ENCODE measurements at regions of chr14 and their contacts with region 1.

Region 1: GRCh38 chr14:76910371-76910890 is 84.2 kb downstream of the LRRC74A start:
- DNase-seq: no peak
- H3K4me3 ChIP-seq: no peak overlapping the region
- H3K27ac ChIP-seq: no peak overlapping the region
- H3K4me1 ChIP-seq: peaks cover 15 to 31% (median 21%) of the 10 kb centered on the region in 4 donors
- H3K27me3 ChIP-seq: no peaks in the 10 kb centered on the region
- CTCF ChIP-seq: no peak
- EP300 ChIP-seq: no peak
- POLR2A ChIP-seq: no peak

Region 2: DNA sequence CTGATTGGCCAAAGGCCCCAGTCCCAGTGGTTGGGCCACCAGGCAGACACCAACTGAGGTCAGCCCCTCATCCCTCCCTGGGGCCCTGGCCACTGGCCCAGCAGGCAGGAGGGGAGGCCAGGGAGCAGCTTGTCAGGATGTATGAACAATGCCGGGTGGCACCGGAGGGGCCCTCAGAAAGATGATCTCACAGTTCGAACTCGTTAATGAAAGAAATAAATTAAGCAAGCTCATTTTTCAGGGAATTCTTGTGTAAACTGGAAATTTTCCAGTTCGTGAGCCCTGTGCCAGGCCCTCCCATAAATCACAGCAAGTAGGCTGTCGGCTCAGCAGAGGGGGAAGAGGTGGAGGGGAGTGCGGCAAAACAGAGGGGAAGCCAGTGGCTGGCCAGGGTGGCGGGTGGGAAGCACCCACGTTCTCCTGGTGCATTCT is 326.1 kb before region 1 on chr14:
- intact Hi-C with region 1: no loop called
- DNase-seq: no peak
- H3K4me3 ChIP-seq: no peak overlapping the region
- H3K27ac ChIP-seq: no peak overlapping the region
- H3K4me1 ChIP-seq: peaks cover 0 to 12% (median 4%) of the 10 kb centered on the region in 4 donors
- H3K27me3 ChIP-seq: no peaks in the 10 kb centered on the region
- CTCF ChIP-seq: no peak
- EP300 ChIP-seq: no peak
- POLR2A ChIP-seq: no peak

Region 3: DNA sequence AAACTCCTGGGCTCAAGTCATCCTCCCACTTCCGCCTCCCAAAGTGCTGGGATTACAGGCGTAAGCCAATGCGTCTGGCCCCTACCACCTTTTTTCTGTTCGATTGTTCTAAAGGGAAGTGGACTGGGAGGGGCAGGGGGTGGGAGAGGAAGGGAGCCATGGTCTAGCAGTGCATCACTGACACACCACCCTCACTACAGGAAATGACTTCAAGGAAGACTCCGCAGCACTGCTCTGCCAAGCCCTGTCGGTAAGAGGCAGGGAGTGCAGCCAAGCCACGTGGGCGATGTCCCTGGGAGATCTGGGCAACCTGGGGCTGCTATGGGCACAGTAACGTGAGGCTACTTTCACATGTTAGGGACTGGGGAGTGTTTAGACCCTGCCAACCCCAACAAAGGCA is 66.2 kb before region 1 on chr14:
- intact Hi-C with region 1: no loop called
- DNase-seq: no peak
- H3K4me3 ChIP-seq: no peak overlapping the region
- H3K27ac ChIP-seq: peak overlapping the region; percentile 31 to 67 (median 50)
- H3K4me1 ChIP-seq: peaks cover 0 to 4% (median 0%) of the 10 kb centered on the region in 4 donors
- H3K27me3 ChIP-seq: peaks cover 0 to 13% (median 0%) of the 10 kb centered on the region in 4 donors
- CTCF ChIP-seq: peak in 1 of 3 experiments; percentile 36
- EP300 ChIP-seq: peak; percentile 18
- POLR2A ChIP-seq: no peak

Region 4: GRCh38 chr14:76876076-76876475 is 34.4 kb before region 1 on chr14:
- intact Hi-C with region 1: loop called (anchors 5 kb)
- DNase-seq: no peak
- H3K4me3 ChIP-seq: no peak overlapping the region
- H3K27ac ChIP-seq: no peak overlapping the region
- H3K4me1 ChIP-seq: peaks cover 0 to 4% (median 2%) of the 10 kb centered on the region in 4 donors
- H3K27me3 ChIP-seq: no peaks in the 10 kb centered on the region
- CTCF ChIP-seq: peak; percentile 94 to 96 (median 94)
- EP300 ChIP-seq: no peak
- POLR2A ChIP-seq: no peak

Region 5: GRCh38 chr14:76947078-76947837 is 36.8 kb after region 1 on chr14:
- intact Hi-C with region 1: no loop called
- DNase-seq: peak; percentile 96
- H3K4me3 ChIP-seq: peak overlapping the region; percentile 24 to 38 (median 28)
- H3K27ac ChIP-seq: peak overlapping the region; percentile 75 to 86 (median 82)
- H3K4me1 ChIP-seq: peaks cover 39 to 51% (median 46%) of the 10 kb centered on the region in 4 donors
- H3K27me3 ChIP-seq: no peaks in the 10 kb centered on the region
- CTCF ChIP-seq: peak; percentile 56 to 67 (median 62)
- EP300 ChIP-seq: no peak
- POLR2A ChIP-seq: no peak

Region 6: GRCh38 chr14:77212943-77213678 is 302.7 kb after region 1 on chr14:
- intact Hi-C with region 1: no loop called
- DNase-seq: no peak
- H3K4me3 ChIP-seq: no peak overlapping the region
- H3K27ac ChIP-seq: no peak overlapping the region
- H3K4me1 ChIP-seq: no peaks in the 10 kb centered on the region
- H3K27me3 ChIP-seq: peaks cover 0 to 42% (median 0%) of the 10 kb centered on the region in 4 donors
- CTCF ChIP-seq: peak in 1 of 3 experiments; percentile 18
- EP300 ChIP-seq: no peak
- POLR2A ChIP-seq: no peak